ENCODE measurements at regions of chr4 and their contacts with region 1.

Region 1: GRCh38 chr4:54683616-54684346 is 26.0 kb downstream of the KIT start:
- DNase-seq: peak in 2 of 4 experiments; percentile 20 to 34
- ATAC-seq: peak; percentile 60; the same call in 2 of the 3 replicates
- H3K4me3 ChIP-seq: no peak overlapping the region
- H3K27ac ChIP-seq: no peak overlapping the region
- H3K4me1 ChIP-seq: no peaks in the 10 kb centered on the region
- H3K27me3 ChIP-seq: no peaks in the 10 kb centered on the region; a peak in 1 of 5 replicates
- CTCF ChIP-seq: peak; percentile 39 to 53 (median 52); a peak in 5 of 6 replicates
- EP300 ChIP-seq: no peak
- POLR2A ChIP-seq: no peak
- RAD21 ChIP-seq: peak; percentile 36 to 38; a peak in 3 of 4 replicates

Region 2: DNA sequence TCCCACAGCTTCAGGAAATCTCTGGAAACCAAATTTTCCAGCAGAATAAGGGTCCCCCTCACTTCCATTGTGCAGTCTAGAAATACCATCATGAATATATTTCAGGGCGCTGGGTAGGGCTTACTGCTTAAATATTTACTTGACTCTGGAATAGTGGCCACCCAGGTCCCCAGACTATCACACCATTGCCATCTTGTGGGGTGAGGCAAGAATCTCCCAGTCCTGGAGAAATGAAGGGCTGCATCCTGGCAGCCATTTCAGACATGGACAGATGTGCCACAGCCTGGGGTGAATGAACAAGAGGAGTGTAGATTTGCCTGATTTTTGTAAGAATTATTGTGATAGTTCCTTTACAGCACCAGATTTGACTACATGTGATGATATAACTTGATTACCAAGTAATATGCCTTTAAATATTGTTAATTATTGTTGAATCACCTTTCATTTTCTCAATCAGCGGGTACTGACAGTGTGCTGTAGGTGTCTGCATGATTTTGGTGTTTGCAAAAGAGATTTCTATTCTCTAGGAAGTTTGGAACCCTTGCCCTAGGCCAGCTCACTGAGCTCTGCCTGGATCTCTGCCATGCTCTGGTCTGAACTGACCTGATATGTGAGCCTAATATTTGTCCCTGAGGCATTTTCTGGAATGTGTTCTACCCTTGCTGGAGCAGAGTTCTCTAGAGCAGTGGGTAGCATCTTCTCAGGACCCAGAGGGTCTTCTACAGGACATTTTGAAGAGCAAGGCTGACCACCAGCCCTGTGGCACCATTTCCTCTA is 157.4 kb after region 1 on chr4:
- CTCF ChIA-PET with region 1: no interaction called
- POLR2A ChIA-PET with region 1: no interaction called
- in situ Hi-C with region 1: no loop called
- intact Hi-C with region 1: loop called (anchors 10 kb)
- DNase-seq: peak in 2 of 4 experiments; percentile 10 to 17
- ATAC-seq: no peak; the same call in 2 of the 3 replicates
- H3K4me3 ChIP-seq: no peak overlapping the region
- H3K27ac ChIP-seq: no peak overlapping the region
- H3K4me1 ChIP-seq: no peaks in the 10 kb centered on the region
- H3K27me3 ChIP-seq: no peaks in the 10 kb centered on the region
- CTCF ChIP-seq: peak in 2 of 3 experiments; percentile 13 to 38; a peak in 2 of 6 replicates
- EP300 ChIP-seq: no peak
- POLR2A ChIP-seq: no peak
- RAD21 ChIP-seq: peak; percentile 37 to 60

Region 3: GRCh38 chr4:54961357-54961975 is 277.7 kb after region 1 on chr4:
- CTCF ChIA-PET with region 1: no interaction called
- POLR2A ChIA-PET with region 1: no interaction called
- in situ Hi-C with region 1: no loop called
- intact Hi-C with region 1: loop called (anchors 5 kb)
- DNase-seq: peak; percentile 23 to 39 (median 30)
- ATAC-seq: peak; percentile 78
- H3K4me3 ChIP-seq: no peak overlapping the region
- H3K27ac ChIP-seq: no peak overlapping the region
- H3K4me1 ChIP-seq: no peaks in the 10 kb centered on the region
- H3K27me3 ChIP-seq: no peaks in the 10 kb centered on the region
- CTCF ChIP-seq: peak; percentile 39 to 66 (median 62); a peak in 5 of 6 replicates
- EP300 ChIP-seq: no peak
- POLR2A ChIP-seq: no peak
- RAD21 ChIP-seq: peak; percentile 68 to 69

Measured in K562 (cell line).